ENCODE measurements at regions of chr1 and their contacts with region 1.

Region 1: DNA sequence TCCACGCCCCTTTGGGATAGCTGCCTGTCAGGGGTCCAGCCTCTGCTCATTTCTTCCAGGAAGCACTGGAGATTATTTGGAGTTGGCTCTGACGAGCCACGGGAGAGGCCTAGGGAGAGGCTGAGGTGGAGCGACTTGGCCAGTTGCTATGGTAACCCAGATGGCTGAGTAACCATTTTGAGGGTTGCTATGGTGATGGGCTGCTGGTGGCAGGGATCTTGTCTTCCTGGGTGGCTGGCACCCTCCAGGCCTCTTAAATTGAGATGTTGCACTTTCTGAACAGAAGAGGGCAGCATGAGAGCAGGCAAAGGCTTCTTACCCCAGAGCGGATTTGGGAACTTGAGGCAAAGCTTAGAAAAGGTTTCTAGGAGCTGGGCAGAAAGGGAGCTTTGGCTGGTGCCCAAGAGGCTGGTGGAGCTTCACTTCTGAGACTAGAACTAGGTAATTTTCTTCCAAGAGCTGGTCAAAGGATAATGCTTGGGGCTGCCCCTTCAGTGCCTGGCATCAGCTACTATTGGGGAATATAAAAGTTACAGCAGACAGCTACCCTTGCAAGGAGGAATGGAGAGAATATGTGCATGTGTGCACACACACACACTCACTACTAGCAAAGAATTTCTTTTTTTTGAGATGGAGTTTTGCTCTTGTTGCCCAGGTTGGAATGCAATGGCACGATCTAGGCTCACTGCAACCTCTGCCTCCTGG is 72.5 kb downstream of the NDUFS5 start:
- DNase-seq: no peak
- H3K4me3 ChIP-seq: no peak overlapping the region
- H3K27ac ChIP-seq: no peak overlapping the region
- H3K4me1 ChIP-seq: peaks cover 16 to 36% (median 17%) of the 10 kb centered on the region in 6 donors
- H3K27me3 ChIP-seq: no peaks in the 10 kb centered on the region
- CTCF ChIP-seq: peak; percentile 41 to 77 (median 67)
- POLR2A ChIP-seq: no peak

Region 2: DNA sequence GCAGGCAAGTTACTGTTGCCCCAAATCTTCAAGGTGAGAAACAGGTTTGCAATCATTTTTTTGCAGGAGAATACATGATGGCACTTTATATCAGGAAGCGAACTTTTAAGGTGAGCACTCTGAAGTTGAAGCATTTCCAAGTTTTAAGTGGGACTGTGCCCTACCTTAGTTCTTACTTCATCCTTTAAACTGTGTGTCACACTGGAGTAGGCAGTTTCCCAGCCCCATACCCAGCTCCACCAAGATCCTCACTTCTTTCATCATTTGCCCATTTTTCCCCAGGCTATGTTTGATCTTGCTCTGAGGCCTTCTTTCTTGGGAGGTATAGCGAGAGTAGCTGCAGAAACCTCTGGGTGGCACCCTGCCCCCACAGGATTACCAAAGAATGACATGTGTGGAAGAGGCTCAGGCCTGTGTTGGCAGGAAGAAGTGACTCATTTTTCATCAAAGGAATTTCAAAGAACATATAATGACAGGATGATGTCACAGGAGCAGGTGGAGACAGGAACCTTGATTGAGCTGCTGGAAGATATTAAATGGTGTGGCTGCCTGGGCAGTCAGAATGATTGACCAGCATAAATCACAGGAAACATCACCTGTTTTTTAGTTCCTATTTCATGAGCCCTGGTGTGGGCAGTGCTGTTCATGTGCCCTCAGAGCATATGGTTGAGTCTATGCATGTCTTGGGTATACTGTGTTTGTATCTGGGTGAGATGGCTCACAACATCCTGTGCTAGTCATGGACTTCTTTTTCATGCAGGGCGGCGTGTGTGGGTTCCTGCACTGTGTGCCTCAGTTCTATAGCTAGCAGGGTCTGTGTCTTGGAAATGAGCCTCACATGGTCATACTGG is 85.0 kb after region 1 on chr1:
- intact Hi-C with region 1: loop called (anchors 5 kb)
- DNase-seq: no peak
- H3K4me3 ChIP-seq: no peak overlapping the region
- H3K27ac ChIP-seq: peak overlapping the region in 7 of 8 donors; percentile 9 to 81 (median 52)
- H3K4me1 ChIP-seq: peaks cover 14 to 43% (median 27%) of the 10 kb centered on the region in 6 donors
- H3K27me3 ChIP-seq: no peaks in the 10 kb centered on the region
- CTCF ChIP-seq: peak; percentile 40 to 71 (median 63)
- POLR2A ChIP-seq: no peak

Region 3: GRCh38 chr1:39258146-39258924 is 159.6 kb after region 1 on chr1:
- intact Hi-C with region 1: loop called (anchors 5 kb)
- DNase-seq: no peak
- H3K4me3 ChIP-seq: no peak overlapping the region
- H3K27ac ChIP-seq: peak overlapping the region in 6 of 8 donors; percentile 5 to 28 (median 19)
- H3K4me1 ChIP-seq: peaks cover 9 to 65% (median 36%) of the 10 kb centered on the region in 6 donors
- H3K27me3 ChIP-seq: no peaks in the 10 kb centered on the region
- CTCF ChIP-seq: peak; percentile 51 to 89 (median 83)
- POLR2A ChIP-seq: no peak

Region 4: GRCh38 chr1:39538588-39539465 is 440.1 kb after region 1 on chr1:
- intact Hi-C with region 1: loop called (anchors 5 kb)
- DNase-seq: peak; percentile 78
- H3K4me3 ChIP-seq: no peak overlapping the region
- H3K27ac ChIP-seq: no peak overlapping the region
- H3K4me1 ChIP-seq: peaks cover 0 to 12% (median 7%) of the 10 kb centered on the region in 6 donors
- H3K27me3 ChIP-seq: no peaks in the 10 kb centered on the region
- CTCF ChIP-seq: peak; percentile 48 to 88 (median 80)
- POLR2A ChIP-seq: no peak

Measured in spleen (tissue), 13 donors.